Activated CD4-positive, alpha-beta T cell treated with anti-CD3 and anti-CD28 coated beads for 36 hours (primary cell): ENCODE measurements at regions of chr13 and their contacts with region 1.

Region 1: GRCh38 chr13:94435604-94436226 is 43.8 kb downstream of the DCT start:
- DNase-seq: no peak
- ATAC-seq: peak; percentile 65
- H3K4me3 Mint-ChIP-seq: no peak overlapping the region
- H3K27ac Mint-ChIP-seq: no peak overlapping the region
- H3K4me1 Mint-ChIP-seq: peaks cover 33% of the 10 kb centered on the region
- H3K27me3 Mint-ChIP-seq: no peaks in the 10 kb centered on the region

Region 2: GRCh38 chr13:93976528-93976927 is 459.2 kb before region 1 on chr13:
- CTCF ChIA-PET with region 1: no interaction called
- POLR2A ChIA-PET with region 1: no interaction called
- intact Hi-C with region 1: no loop called
- DNase-seq: no peak
- ATAC-seq: no peak
- H3K4me3 Mint-ChIP-seq: no peak overlapping the region
- H3K27ac Mint-ChIP-seq: no peak overlapping the region
- H3K4me1 Mint-ChIP-seq: no peaks in the 10 kb centered on the region
- H3K27me3 Mint-ChIP-seq: peaks cover 7% of the 10 kb centered on the region

Region 3: DNA sequence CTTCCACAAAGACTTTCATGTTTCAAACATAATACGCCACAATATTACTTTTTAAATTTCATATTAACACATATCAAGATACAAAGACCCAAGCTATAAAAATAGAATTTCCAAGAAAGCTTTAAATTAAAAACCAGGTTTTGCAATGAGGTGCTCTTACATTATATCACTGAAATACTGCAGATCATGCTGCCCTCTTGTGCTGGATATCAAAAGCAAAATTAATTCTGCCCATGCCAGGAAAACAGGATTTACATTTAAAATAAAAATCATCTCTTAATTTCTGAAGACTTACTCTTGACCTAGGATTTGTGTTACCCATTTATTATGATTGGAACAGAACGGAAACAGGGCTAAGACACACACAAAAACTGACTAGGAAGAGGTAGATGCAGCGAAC is 720.5 kb after region 1 on chr13:
- CTCF ChIA-PET with region 1: no interaction called
- POLR2A ChIA-PET with region 1: no interaction called
- intact Hi-C with region 1: loop called in 1 of 2 experiments (anchors 10 kb)
- DNase-seq: no peak
- ATAC-seq: no peak
- H3K4me3 Mint-ChIP-seq: no peak overlapping the region
- H3K27ac Mint-ChIP-seq: no peak overlapping the region
- H3K4me1 Mint-ChIP-seq: peaks cover 9% of the 10 kb centered on the region
- H3K27me3 Mint-ChIP-seq: no peaks in the 10 kb centered on the region